Common myeloid progenitor, CD34-positive (primary cell): ENCODE measurements at regions of chr1 and their contacts with region 1.

Region 1: DNA sequence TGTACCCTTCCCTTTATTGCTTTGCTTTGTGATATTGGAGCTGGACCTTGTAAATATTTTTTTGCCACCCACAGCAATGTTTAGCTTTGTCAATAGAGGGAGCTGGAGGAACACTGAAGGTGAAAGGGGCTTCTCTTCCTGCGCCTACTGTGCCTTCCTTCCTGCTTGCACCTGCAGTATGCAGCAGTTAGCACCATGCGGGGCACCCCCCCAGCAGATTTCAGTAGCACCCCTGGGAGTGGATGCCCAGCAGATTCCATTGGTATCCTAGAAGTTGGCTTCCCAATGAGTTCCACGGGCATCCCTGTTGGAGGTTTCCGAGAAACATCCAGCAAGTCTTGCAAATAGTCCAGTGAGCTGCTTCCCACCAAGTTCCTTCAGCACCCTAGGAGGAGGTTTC is 25.6 kb downstream of the S100A10 start:
- DNase-seq: peak; percentile 48 to 66 (median 55)
- H3K4me3 ChIP-seq: no peak overlapping the region
- H3K27ac ChIP-seq: no peak overlapping the region
- H3K4me1 ChIP-seq: peaks cover 0 to 25% (median 16%) of the 10 kb centered on the region in 4 experiments
- H3K27me3 ChIP-seq: peaks cover 0 to 2% (median 0%) of the 10 kb centered on the region in 5 experiments

Region 2: DNA sequence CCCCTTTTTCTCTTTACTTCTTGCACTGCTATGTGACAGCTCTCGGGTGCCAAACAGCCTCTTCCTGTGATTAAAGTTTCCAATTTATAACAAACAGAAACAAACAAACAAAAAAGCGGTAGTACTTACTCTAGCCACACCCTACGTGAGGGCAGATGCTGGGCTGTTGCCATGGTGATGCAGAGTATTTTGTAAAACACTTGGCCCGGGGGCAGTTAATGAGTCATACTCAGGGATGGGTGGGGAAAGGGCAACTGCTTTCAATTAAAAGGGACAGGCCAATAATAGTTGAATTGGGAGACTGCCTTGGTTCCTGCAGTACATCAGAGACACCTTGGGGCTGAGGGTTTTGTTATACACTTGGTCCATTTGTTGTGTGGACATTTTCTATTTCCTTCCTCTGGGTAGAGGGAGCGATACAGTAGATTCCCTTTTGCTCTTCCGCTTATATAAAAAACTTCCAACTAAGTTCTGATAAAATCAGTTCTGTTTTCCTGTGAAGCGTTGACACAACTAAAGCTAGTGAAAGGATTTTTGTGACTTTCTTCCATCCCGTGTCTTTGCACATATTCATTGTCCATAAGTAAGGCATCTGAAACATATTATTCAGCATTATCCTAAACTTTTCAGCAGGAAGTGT is 22.2 kb before region 1 on chr1:
- CTCF ChIA-PET with region 1: interaction called, 103 read pairs
- POLR2A ChIA-PET with region 1: no interaction called
- DNase-seq: peak; percentile 99 to 100 (median 99)
- H3K4me3 ChIP-seq: peak overlapping the region in 1 of 7 experiments; percentile 54
- H3K27ac ChIP-seq: peak overlapping the region; percentile 80 to 93
- H3K4me1 ChIP-seq: peaks cover 2 to 50% (median 26%) of the 10 kb centered on the region in 4 experiments
- H3K27me3 ChIP-seq: no peaks in the 10 kb centered on the region

Region 3: DNA sequence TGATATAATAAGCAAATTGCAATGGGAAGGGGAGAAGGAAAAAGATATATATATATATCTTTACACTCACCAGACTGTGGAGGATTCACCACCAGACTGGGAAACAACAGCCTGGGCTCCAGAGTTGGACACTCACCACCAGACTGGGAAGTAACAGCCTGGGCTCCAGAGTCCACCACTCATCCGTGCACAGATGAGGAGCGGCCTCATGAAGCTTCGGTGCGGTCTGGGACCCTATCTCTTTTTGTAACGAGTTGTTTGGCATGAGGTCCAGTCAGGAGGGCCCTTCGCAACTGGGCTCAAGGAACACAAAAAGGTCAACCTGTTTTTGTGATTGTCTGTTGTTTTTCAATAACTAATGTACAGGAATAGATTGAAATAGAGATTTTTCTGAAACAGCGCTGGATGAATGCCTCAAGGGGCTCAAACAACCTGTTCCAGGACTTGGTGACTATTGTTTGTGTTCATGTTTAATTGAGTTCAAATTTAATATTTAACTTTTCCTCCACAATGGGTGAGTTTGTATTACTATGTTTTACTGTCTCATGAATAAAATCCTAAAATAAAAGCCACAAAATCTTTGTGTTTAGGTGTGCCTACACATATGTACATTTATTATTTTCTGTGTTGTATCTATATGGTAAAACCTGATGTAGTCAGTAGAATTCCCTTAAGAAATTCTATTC is 14.5 kb before region 1 on chr1:
- CTCF ChIA-PET with region 1: interaction called, 12 read pairs
- POLR2A ChIA-PET with region 1: interaction called, 3 read pairs
- DNase-seq: no peak
- H3K4me3 ChIP-seq: no peak overlapping the region
- H3K27ac ChIP-seq: no peak overlapping the region
- H3K4me1 ChIP-seq: peaks cover 0 to 5% (median under 1%) of the 10 kb centered on the region in 4 experiments
- H3K27me3 ChIP-seq: no peaks in the 10 kb centered on the region

Region 4: DNA sequence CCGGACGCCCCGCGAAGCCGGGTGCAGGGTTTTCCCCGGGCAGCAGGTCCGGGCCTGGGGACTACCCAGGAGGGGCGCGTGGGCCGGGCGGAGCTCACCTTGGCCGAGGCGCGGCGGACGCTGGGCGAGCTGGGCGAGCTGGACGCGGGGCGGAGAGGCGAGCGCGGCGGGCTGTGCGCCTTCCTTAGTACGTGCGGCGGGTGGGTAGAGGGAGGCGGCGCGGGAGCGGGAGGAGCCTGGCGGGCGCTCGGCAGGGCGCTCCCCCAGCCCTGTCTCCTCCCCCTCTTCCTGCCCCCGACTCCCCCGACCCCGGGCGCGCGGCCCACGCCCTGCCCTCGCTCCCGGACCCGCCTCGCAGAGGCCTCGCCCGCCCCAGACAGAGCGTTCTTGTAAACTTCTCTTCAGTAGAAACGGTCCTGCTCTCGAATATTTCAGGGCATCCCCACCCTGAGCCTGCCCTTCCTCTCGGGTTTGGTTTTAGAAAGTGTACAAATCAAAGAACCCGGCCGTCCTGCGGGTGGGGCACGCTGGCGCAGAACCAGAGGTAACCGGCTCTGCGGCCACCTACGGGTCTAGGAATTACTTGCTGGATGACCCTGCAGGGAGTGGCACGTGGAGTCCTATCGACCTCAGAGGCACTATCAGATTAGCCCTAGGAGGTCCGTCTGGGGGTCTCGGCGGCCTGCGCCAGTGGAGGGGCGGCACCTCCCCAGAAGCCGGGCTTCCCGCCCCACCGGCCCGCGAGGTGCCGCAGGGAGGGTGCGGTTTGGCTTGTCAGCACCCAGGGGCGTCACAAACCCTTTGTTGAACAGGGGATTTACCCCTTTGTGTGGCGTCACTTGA is 25.8 kb after region 1 on chr1 and contains the start of gene S100A10:
- CTCF ChIA-PET with region 1: interaction called, 162 read pairs
- POLR2A ChIA-PET with region 1: no interaction called
- DNase-seq: peak; percentile 50 to 77 (median 70)
- H3K4me3 ChIP-seq: peak within 1 kb of the TSS; percentile 28 to 86 (median 72)
- H3K27ac ChIP-seq: peak within 1 kb of the TSS in 1 of 2 experiments; percentile 7
- H3K4me1 ChIP-seq: peaks cover 0 to 31% (median 22%) of the 10 kb centered on the region in 4 experiments
- H3K27me3 ChIP-seq: peaks cover 0 to 46% (median 5%) of the 10 kb centered on the region in 5 experiments

Region 5: GRCh38 chr1:152179566-152179965 is 211.5 kb after region 1 on chr1:
- CTCF ChIA-PET with region 1: no interaction called
- POLR2A ChIA-PET with region 1: no interaction called
- DNase-seq: no peak
- H3K4me3 ChIP-seq: no peak overlapping the region
- H3K27ac ChIP-seq: no peak overlapping the region
- H3K4me1 ChIP-seq: no peaks in the 10 kb centered on the region
- H3K27me3 ChIP-seq: no peaks in the 10 kb centered on the region